PC-3 (cell line): ENCODE measurements at regions of chr12 and their contacts with region 1.

Region 1: DNA sequence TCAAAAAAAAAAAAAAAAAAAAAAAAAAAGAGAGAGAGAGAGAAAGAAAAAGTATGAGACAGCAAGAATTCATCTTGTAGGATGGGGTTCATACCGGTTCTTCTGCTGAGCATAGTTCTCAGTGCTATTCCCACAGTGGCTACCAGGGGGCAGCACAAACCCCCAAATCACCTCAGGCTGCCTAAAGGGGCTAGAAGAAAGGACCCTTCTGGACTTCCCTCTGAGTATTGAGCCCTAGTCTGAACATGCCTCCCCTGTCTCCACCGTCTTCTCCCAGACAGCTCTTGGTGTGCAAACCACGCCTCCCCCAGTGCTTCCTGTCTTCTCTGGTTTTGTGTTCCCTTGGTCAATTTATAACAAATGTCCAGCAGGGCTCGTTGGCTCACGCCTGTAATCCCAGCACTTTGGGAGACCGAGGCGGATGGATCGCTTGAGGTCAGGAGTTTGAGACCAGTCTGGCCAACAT is 31.3 kb upstream of the SMUG1 start:
- DNase-seq: peak; percentile 75
- ATAC-seq: peak; percentile 52
- H3K4me3 ChIP-seq: peak overlapping the region; percentile 62; the same call in 1 of the 2 replicates
- H3K27ac ChIP-seq: no peak overlapping the region
- H3K4me1 ChIP-seq: peaks cover 16% of the 10 kb centered on the region
- H3K27me3 ChIP-seq: no peaks in the 10 kb centered on the region
- CTCF ChIP-seq: peak; percentile 79

Region 2: DNA sequence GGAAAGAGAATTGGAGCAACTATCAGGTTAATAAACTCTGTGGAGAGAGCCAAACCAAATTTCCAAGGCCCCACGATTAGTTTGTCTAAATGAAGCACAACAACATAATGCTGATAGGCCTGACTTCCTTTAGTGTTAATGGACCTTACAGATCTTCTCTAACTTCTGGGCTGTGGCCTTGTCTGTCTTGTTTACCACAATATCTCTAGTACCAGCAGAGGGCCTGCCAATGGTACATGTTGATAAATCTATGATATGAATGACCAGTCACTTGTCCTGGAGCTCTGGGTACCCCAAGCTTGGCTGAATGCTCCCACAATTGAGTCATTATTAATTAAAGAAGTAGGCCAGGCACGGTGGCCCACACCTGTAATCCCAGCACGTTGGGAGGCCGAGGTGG is 389.5 kb before region 1 on chr12:
- CTCF ChIA-PET with region 1: interaction called, 12 read pairs
- POLR2A ChIA-PET with region 1: no interaction called
- intact Hi-C with region 1: no loop called
- DNase-seq: no peak
- ATAC-seq: no peak
- H3K4me3 ChIP-seq: no peak overlapping the region
- H3K27ac ChIP-seq: no peak overlapping the region
- H3K4me1 ChIP-seq: peaks cover 27% of the 10 kb centered on the region
- H3K27me3 ChIP-seq: no peaks in the 10 kb centered on the region
- CTCF ChIP-seq: no peak